ENCODE measurements at regions of chr16 and their contacts with region 1.

Region 1: DNA sequence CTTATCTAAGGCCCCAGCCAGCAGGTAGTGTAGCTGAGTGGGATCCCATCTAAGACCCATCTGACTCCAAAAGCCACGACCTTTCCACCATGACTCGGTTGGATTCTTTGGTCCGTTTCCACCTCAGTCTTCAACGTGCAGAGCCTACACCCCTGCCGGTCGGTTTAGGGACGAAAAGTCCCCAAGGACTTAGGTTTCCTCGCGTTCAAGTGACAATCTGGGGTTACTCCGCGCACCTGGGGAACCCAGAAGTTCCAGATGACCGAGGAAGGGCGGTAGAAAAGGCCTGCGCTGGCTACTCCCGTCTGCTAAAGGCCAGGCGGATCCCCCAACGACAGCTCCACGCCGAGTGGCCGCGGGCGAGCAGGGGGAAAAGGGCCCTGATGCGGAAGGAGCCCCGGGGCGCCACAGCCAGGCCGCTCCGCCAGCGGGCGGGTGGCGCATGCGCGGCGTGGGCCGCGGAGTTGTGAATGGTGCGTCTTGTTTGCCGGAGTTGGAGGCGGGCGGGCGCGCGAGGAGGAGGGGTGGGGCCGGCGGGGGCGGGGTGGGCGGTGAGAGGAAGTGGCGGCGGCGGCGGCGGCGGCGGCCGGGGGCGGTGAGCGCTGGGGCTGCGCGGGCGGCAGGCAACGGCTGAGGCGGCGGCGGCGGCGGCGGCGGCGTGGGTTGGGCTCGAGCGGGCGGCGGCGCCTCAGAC is at the start of gene CBFB:
- DNase-seq: peak; percentile 90 to 93
- H3K4me3 ChIP-seq: peak within 1 kb of the TSS; percentile 74 to 80 (median 76)
- H3K27ac ChIP-seq: peak within 1 kb of the TSS; percentile 97 to 99 (median 98)
- H3K4me1 ChIP-seq: peaks cover 12 to 31% of the 10 kb centered on the region in 2 donors
- H3K27me3 ChIP-seq: no peaks in the 10 kb centered on the region
- CTCF ChIP-seq: peak in 2 of 6 experiments; percentile 13 to 22
- POLR2A ChIP-seq: peak in 1 of 2 donors; percentile 82
- total RNA-seq, gene CBFB: 31.0 to 60.0 (median 41.5) TPM

Region 2: GRCh38 chr16:67109407-67110135 is 80.9 kb after region 1 on chr16 and contains the start of gene PHAF1:
- intact Hi-C with region 1: loop called (anchors 10 kb)
- DNase-seq: peak; percentile 92 to 95
- H3K4me3 ChIP-seq: peak within 1 kb of the TSS; percentile 79 to 95 (median 90)
- H3K27ac ChIP-seq: peak within 1 kb of the TSS; percentile 56 to 80 (median 72)
- H3K4me1 ChIP-seq: peaks cover 20 to 34% of the 10 kb centered on the region in 2 donors
- H3K27me3 ChIP-seq: no peaks in the 10 kb centered on the region
- CTCF ChIP-seq: no peak
- POLR2A ChIP-seq: peak in 1 of 2 donors; percentile 90
- total RNA-seq, gene PHAF1: 11.4 to 18.9 (median 17.5) TPM

Region 3: GRCh38 chr16:67150833-67151396 is 122.2 kb after region 1 on chr16 and contains the start of gene B3GNT9:
- intact Hi-C with region 1: loop called (anchors 5 kb)
- DNase-seq: peak; percentile 87 to 89
- H3K4me3 ChIP-seq: peak within 1 kb of the TSS; percentile 60 to 67 (median 61)
- H3K27ac ChIP-seq: peak within 1 kb of the TSS; percentile 73 to 85 (median 83)
- H3K4me1 ChIP-seq: peaks cover 19 to 43% of the 10 kb centered on the region in 2 donors
- H3K27me3 ChIP-seq: no peaks in the 10 kb centered on the region
- CTCF ChIP-seq: no peak
- POLR2A ChIP-seq: peak in 1 of 2 donors; percentile 56
- total RNA-seq, gene B3GNT9: 52.0 to 103 (median 85.7) TPM

Measured in thyroid gland (tissue), 4 donors.